IMR-90 (cell line): ENCODE measurements at regions of chr4 and their contacts with region 1.

Region 1: GRCh38 chr4:87848622-87849351 is 16.0 kb downstream of the MEPE start:
- DNase-seq: peak; percentile 56
- ATAC-seq: peak; percentile 93
- H3K4me3 ChIP-seq: no peak overlapping the region
- H3K27ac ChIP-seq: no peak overlapping the region
- H3K4me1 ChIP-seq: no peaks in the 10 kb centered on the region
- H3K27me3 ChIP-seq: peaks cover 6% of the 10 kb centered on the region
- CTCF ChIP-seq: peak; percentile 57
- POLR2A ChIP-seq: no peak
- RAD21 ChIP-seq: peak; percentile 61

Region 2: GRCh38 chr4:87370068-87370467 is 478.7 kb before region 1 on chr4:
- CTCF ChIA-PET with region 1: no interaction called
- POLR2A ChIA-PET with region 1: no interaction called
- dilution Hi-C with region 1: no loop called
- in situ Hi-C with region 1: no loop called
- intact Hi-C with region 1: loop called (anchors 5 kb)
- DNase-seq: no peak
- ATAC-seq: no peak
- H3K4me3 ChIP-seq: no peak overlapping the region
- H3K27ac ChIP-seq: no peak overlapping the region
- H3K4me1 ChIP-seq: no peaks in the 10 kb centered on the region; the same call in 1 of the 2 replicates
- H3K27me3 ChIP-seq: no peaks in the 10 kb centered on the region
- CTCF ChIP-seq: no peak
- POLR2A ChIP-seq: no peak
- RAD21 ChIP-seq: no peak

Region 3: DNA sequence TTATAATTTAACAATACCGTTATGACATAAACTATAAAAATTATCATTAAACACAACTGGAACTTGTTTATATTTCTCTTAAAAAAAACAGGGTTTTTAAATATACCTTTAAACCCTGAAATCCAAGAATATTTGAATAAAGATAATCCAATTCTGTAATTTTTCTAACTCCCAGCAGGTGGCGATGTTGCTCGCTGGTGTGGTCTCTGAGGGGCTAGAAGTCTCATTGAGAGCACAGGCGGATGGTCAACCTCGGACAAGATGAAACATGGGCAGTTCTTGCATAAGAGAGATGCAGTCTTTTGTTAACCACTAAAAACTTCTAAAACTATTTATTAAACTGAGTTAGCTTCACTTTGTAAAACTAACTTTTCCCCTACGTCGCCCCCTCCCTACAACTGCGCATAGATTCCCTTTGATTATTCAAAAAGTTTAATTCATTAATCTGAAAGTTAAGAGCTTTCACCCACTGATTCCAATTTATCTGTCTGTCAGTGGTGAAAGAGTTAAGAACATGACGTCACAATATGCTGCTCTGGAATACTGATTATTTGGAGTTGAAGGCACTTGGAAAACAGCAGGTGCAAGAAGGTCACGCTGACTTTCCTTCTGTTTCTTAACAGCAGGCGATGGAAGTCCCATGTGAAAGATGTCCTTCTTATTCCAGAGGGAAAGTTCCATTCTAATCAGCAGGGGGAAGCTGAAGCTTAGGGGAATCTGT is 169.2 kb before region 1 on chr4:
- CTCF ChIA-PET with region 1: interaction called, 10 read pairs
- POLR2A ChIA-PET with region 1: no interaction called
- dilution Hi-C with region 1: no loop called
- in situ Hi-C with region 1: no loop called
- intact Hi-C with region 1: loop called (anchors 1 kb)
- DNase-seq: peak; percentile 58
- ATAC-seq: peak; percentile 77
- H3K4me3 ChIP-seq: no peak overlapping the region
- H3K27ac ChIP-seq: no peak overlapping the region
- H3K4me1 ChIP-seq: no peaks in the 10 kb centered on the region
- H3K27me3 ChIP-seq: no peaks in the 10 kb centered on the region
- CTCF ChIP-seq: peak; percentile 81
- POLR2A ChIP-seq: no peak
- RAD21 ChIP-seq: peak; percentile 83

Region 4: DNA sequence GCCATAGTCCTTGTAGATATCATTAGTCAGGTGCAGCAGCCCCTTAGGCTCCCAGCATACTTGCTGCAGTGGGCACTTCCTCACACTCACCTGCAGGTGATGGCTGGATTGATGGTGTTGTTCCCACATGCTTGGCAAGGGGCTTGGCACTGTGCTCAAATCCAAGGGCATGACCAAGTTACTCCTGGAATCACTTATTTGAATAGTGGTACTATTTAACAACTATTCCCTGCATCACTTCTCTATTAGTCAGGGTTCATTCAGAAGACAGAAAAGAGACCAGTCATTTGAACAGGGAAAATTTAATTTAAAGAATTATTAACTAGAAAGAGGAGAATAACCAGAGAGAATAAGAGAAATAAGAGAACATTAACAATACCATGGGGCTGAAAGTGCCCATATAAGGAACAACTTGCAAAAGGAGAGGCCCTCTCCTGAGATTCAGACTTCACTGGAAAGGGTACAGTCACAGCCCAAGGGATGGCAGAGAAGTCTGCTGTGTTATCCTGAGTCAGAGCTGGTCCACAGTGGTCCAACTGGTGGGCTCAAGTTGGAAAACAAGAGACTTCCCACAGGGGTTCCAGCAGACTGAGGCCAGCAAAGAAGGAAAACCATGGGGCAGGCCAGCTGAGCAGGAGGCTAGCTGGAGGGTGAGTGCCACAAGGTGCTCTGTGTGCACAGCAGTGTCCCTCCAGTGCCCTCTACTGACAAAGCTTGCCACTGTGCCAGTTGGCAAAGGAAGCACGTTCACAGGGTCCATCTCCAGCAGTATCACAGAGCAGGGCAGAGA is 136.5 kb after region 1 on chr4:
- CTCF ChIA-PET with region 1: interaction called, 7 read pairs
- POLR2A ChIA-PET with region 1: no interaction called
- dilution Hi-C with region 1: no loop called
- in situ Hi-C with region 1: no loop called
- intact Hi-C with region 1: loop called (anchors 5 kb)
- DNase-seq: peak; percentile 35
- ATAC-seq: peak; percentile 87
- H3K4me3 ChIP-seq: no peak overlapping the region
- H3K27ac ChIP-seq: no peak overlapping the region
- H3K4me1 ChIP-seq: no peaks in the 10 kb centered on the region
- H3K27me3 ChIP-seq: peaks cover 3% of the 10 kb centered on the region; the same call in 1 of the 2 replicates
- CTCF ChIP-seq: peak; percentile 39
- POLR2A ChIP-seq: no peak
- RAD21 ChIP-seq: peak; percentile 36; the same call in 1 of the 2 replicates

Region 5: DNA sequence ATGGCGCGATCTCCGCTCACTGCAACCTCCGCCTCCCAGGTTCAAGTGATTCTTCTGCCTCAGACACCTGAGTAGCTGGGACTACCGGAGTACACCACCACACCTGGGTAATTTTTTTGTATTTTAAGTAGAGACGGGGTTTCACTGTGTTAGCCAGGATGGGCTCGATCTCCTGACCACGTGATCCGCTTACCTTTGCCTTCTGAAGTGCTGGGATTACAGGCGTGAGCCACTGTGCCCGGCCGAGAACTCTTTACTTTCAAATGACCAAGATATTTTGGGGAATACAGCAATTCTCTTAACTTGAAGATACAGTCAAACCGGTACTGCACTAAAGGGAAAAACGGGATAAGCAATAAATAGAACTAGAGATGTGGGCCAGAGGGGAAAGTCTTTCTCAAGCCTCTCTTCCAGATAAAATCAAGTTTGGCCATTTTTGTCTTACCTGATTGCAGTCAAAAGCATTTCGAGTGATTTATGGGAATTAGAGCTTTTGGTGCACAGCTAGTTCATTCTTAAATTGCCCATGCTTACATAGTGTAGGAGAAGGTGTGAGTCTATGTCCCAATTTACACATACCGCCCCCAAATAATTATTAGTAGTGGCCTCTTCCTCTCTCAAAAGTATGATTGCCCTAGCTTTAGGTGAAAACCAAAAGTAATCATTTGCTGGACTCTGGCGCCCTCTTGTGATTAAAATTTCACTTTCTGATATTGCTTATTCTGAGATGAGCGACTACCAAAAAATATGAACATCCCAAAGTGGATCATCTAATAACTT is 362.9 kb after region 1 on chr4:
- CTCF ChIA-PET with region 1: interaction called, 7 read pairs
- POLR2A ChIA-PET with region 1: no interaction called
- dilution Hi-C with region 1: no loop called
- in situ Hi-C with region 1: no loop called
- intact Hi-C with region 1: loop called (anchors 1 kb)
- DNase-seq: peak; percentile 46
- ATAC-seq: peak; percentile 70
- H3K4me3 ChIP-seq: no peak overlapping the region
- H3K27ac ChIP-seq: no peak overlapping the region
- H3K4me1 ChIP-seq: no peaks in the 10 kb centered on the region
- H3K27me3 ChIP-seq: peaks cover 11% of the 10 kb centered on the region
- CTCF ChIP-seq: peak; percentile 88
- POLR2A ChIP-seq: peak; percentile 44; the same call in 1 of the 2 replicates
- RAD21 ChIP-seq: peak; percentile 96